Panc1 (cell line): ENCODE measurements at regions of chr4 and their contacts with region 1.

Region 1: DNA sequence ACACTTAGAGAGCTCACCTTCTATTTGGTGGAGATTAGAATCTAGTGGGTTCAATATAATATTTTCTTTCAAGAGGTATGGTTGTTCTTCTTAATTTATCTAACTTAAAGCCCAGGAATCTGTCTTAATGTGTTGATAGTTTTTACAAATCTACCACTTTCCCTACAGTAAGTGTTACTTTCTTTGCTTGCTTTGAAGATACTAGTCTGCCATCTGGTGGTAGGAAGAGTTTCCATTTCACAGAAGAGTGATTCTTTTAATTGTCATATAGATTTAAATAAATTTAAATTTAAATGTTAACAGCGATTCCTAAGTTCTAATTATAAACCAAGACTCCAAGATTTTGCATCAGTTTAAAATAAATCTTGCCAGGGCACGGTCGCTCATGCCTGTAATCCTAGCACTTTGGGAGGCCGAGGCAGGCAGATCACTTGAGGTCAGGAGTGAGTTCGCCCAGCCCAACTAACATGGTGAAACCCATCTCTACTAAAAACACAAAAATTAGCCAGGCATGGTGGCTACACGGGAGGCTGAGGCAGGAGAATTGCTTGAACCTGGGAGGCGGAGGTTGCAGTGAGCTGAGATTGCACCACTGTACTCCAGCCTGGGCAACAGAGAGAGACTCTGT is 43.5 kb downstream of the NUDT9 start:
- DNase-seq: no peak
- ATAC-seq: peak; percentile 75; the same call in 1 of the 2 replicates
- H3K4me3 ChIP-seq: no peak overlapping the region
- H3K27ac ChIP-seq: no peak overlapping the region
- H3K4me1 ChIP-seq: no peaks in the 10 kb centered on the region
- H3K27me3 ChIP-seq: no peaks in the 10 kb centered on the region
- CTCF ChIP-seq: peak; percentile 56; the same call in 1 of the 2 replicates

Region 2: DNA sequence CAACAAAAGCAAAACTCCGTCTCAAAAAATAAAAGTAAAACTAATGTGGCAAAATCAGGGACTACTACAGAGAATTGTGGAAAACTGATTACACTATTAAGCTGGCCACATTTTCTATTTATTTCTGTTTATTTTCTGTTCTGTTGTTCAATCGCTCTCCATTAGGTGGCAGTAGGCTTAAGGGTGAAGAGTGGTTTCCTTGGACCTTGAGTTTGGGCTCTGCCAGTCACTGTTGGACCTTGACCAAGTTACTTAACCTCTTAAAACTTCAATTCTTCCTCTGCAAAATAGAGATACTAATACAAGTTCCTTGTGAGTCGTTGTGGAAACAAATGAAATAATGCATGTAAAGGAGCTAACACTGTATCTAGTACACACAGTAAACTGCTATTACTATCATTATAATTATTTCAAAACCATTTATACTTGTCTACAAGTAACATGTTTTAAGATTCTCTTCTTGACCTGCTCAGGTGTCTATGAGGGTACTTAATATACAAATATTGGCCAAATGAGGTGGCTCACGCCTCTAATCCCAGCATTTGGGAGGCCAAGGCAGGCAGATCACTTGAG is 90.0 kb before region 1 on chr4:
- CTCF ChIA-PET with region 1: interaction called, 3 read pairs
- POLR2A ChIA-PET with region 1: no interaction called
- in situ Hi-C with region 1: no loop called
- intact Hi-C with region 1: loop called (anchors 5 kb)
- DNase-seq: no peak
- ATAC-seq: 0 out of 2 replicates have a peak, but pooled peaks have one; percentile 53
- H3K4me3 ChIP-seq: no peak overlapping the region
- H3K27ac ChIP-seq: no peak overlapping the region
- H3K4me1 ChIP-seq: no peaks in the 10 kb centered on the region
- H3K27me3 ChIP-seq: no peaks in the 10 kb centered on the region
- CTCF ChIP-seq: peak; percentile 72

Region 3: DNA sequence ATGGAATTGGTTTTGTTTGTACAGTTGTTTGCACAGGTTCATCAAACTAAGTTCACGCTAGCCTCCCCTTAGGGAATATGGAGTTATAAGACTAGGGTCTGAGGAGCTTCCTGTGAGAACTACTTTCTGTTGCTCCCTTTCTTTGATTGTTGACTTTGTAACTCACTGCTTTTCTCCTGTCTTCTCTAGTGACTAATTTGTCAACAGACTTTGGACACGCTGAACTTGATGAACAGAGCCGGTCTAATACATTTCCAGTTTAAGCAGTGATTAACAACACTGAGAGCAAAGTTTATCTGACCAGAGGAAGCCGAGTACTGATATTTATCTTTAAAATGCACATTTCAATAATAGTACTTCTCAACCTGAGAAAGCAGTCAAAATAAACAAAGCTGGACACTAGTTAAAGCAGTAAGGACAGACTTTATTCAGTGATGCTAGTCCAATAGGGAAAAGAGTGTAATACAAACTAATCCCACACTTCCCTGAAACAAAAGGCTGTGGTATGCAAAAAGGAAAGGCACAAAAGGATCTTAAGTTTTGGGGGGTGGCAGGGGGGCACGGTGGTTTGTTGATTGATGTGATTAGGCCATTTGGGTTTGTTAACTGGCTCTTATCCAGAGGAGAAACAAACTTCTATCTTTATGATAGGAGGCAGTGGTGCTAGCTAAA is 46.1 kb before region 1 on chr4:
- CTCF ChIA-PET with region 1: no interaction called
- POLR2A ChIA-PET with region 1: no interaction called
- in situ Hi-C with region 1: no loop called
- intact Hi-C with region 1: no loop called
- DNase-seq: no peak
- ATAC-seq: no peak
- H3K4me3 ChIP-seq: no peak overlapping the region
- H3K27ac ChIP-seq: peak overlapping the region; percentile 54
- H3K4me1 ChIP-seq: peaks cover 17% of the 10 kb centered on the region; the same call in 1 of the 2 replicates
- H3K27me3 ChIP-seq: no peaks in the 10 kb centered on the region
- CTCF ChIP-seq: no peak

Region 4: DNA sequence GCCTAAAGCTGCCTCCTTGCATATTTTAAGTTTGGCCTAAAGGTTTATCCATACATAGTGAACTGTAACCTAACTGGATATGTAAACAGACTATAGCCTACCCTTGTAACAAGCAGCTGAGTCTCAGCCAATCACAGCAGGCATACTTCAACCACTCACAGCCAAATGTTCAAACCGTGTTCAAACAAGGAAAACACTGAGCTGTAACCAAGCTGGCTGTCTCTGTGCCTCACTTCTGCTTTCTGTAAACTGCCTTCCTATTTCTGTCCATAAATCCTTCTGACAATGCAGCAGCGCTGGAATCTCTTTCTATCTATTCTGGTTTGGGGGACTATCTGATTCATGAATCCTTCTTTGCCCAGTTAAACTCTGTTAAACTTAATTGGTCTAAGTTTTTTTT is 158.8 kb after region 1 on chr4:
- CTCF ChIA-PET with region 1: no interaction called
- POLR2A ChIA-PET with region 1: no interaction called
- in situ Hi-C with region 1: no loop called
- intact Hi-C with region 1: no loop called
- DNase-seq: no peak
- ATAC-seq: no peak
- H3K4me3 ChIP-seq: no peak overlapping the region
- H3K27ac ChIP-seq: no peak overlapping the region
- H3K4me1 ChIP-seq: no peaks in the 10 kb centered on the region
- H3K27me3 ChIP-seq: no peaks in the 10 kb centered on the region; the same call in 1 of the 2 replicates
- CTCF ChIP-seq: no peak